ENCODE measurements at regions of chr5 and their contacts with region 1.

Region 1: GRCh38 chr5:78359831-78360673 is at the start of gene SCAMP1:
- DNase-seq: peak; percentile 92
- H3K4me3 Mint-ChIP-seq: peak within 1 kb of the TSS; percentile 95
- H3K27ac Mint-ChIP-seq: peak within 1 kb of the TSS; percentile 97
- H3K4me1 Mint-ChIP-seq: peaks cover 34% of the 10 kb centered on the region
- H3K27me3 Mint-ChIP-seq: no peaks in the 10 kb centered on the region
- total RNA-seq, gene SCAMP1: 9.7 to 10.3 TPM

Region 2: DNA sequence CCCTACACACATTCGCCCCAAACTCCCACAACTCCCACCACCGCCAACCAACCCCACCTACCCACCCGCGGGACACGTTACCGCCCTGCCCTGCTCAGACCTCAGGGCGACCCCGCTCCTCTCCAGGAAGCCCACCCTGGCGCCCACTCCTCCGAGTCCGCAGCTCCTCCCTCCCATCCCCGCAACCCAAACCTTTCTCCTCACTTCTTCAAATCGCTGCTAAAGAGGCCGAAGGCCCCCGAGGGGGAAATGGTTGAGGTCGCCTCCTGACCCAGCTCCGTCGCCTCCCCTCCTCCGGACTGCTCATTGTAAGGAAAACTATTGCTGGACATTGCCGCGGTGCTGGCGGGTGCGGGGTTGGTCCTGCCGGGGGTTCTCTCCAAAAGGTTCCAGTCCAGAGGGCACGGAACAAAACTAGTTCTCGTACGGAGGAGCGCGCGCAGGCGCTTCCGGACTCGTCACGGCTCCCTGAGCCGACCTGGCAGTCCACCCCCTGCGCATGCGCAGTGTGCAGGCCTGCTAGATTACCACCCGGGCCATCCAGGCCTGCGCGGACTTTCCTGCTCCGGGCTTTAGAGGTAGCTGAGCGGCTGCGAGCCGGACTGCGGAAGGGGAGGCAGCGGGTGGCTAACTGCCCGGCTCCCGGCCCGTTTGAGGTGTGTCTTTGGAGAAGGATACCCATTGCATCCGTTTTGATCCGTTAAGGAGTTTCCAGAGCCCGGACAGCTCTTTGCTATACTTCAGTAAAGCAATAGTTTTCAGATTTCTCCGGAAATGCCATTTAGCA is 65.6 kb before region 1 on chr5 and contains the start of gene AP3B1:
- CTCF ChIA-PET with region 1: interaction called, 6 read pairs
- intact Hi-C with region 1: loop called (anchors 1 kb)
- DNase-seq: peak; percentile 97
- H3K4me3 Mint-ChIP-seq: peak within 1 kb of the TSS; percentile 91
- H3K27ac Mint-ChIP-seq: peak within 1 kb of the TSS; percentile 97
- H3K4me1 Mint-ChIP-seq: peaks cover 32% of the 10 kb centered on the region
- H3K27me3 Mint-ChIP-seq: no peaks in the 10 kb centered on the region
- total RNA-seq, gene AP3B1: 29.9 to 33.0 TPM

Region 3: DNA sequence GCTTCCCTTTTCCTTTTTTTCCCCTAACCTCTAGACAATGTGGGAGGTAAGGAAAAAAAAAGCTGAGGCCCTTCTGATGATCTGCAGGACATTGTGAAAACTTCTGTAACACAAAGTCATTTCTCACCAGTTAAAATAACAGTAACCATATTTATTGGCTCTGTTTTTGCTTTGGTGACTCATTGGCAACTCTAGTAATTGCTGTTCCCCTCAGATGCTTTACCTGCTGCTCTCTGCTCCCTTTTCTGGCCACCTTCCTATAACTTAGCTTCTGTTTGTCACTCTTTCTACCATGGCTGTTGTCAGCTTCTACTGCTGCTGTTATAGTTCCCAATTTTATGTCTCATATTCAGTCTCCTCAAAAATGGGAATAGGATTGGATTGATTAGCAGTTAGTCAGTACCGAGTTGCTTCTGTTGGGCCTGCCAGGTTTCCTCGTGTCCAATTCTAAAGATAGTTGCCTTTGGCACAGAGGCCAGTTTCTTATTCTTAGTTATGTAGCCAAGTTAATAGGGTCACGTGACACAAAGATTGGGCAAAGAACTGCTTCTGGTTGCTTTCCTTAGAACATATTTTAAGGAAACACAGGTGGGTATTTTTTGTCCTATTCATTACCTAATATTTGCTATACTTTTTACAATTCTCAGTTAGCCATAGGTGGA is 17.1 kb after region 1 on chr5:
- CTCF ChIA-PET with region 1: interaction called, 6 read pairs
- intact Hi-C with region 1: loop called (anchors 1 kb)
- DNase-seq: no peak
- H3K4me3 Mint-ChIP-seq: no peak overlapping the region
- H3K27ac Mint-ChIP-seq: no peak overlapping the region
- H3K4me1 Mint-ChIP-seq: peaks cover 32% of the 10 kb centered on the region
- H3K27me3 Mint-ChIP-seq: no peaks in the 10 kb centered on the region

Region 4: GRCh38 chr5:78405829-78406750 is 46.0 kb after region 1 on chr5:
- CTCF ChIA-PET with region 1: no interaction called
- intact Hi-C with region 1: loop called (anchors 1 kb)
- DNase-seq: no peak
- H3K4me3 Mint-ChIP-seq: no peak overlapping the region
- H3K27ac Mint-ChIP-seq: peak overlapping the region; percentile 72
- H3K4me1 Mint-ChIP-seq: peaks cover 50% of the 10 kb centered on the region
- H3K27me3 Mint-ChIP-seq: no peaks in the 10 kb centered on the region

Region 5: GRCh38 chr5:78490709-78491485 is 130.8 kb after region 1 on chr5:
- CTCF ChIA-PET with region 1: no interaction called
- intact Hi-C with region 1: loop called (anchors 5 kb)
- DNase-seq: no peak
- H3K4me3 Mint-ChIP-seq: no peak overlapping the region
- H3K27ac Mint-ChIP-seq: no peak overlapping the region
- H3K4me1 Mint-ChIP-seq: no peaks in the 10 kb centered on the region
- H3K27me3 Mint-ChIP-seq: no peaks in the 10 kb centered on the region